Caco-2 (cell line): ENCODE measurements at regions of chr20 and their contacts with region 1.

Region 1: DNA sequence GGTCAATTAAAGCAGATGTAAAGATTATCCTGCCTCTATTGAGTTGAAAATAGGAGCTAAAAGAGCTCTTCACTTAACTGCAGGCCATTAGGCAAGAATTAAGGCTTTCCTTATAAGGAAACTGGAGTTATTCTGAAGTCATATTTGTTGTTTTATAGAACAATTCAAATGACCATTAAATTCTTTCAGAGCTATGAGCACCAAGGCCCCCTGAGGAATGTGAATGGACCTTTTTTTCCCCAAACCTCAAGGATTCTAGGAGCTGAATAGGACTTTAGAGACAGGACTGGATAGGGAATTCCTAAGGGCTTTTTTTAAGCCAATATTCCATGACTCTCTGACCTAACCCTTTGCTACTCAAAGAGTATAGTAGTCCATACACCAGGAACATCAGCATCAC is 565.7 kb upstream of the BTBD3 start:
- DNase-seq: no peak
- H3K4me3 ChIP-seq: no peak overlapping the region
- H3K4me3 Mint-ChIP-seq: no peak overlapping the region
- H3K27ac Mint-ChIP-seq: no peak overlapping the region
- H3K4me1 ChIP-seq: no peaks in the 10 kb centered on the region
- H3K4me1 Mint-ChIP-seq: peaks cover 7% of the 10 kb centered on the region
- H3K27me3 ChIP-seq: no peaks in the 10 kb centered on the region
- H3K27me3 Mint-ChIP-seq: no peaks in the 10 kb centered on the region
- CTCF ChIP-seq: no peak

Region 2: DNA sequence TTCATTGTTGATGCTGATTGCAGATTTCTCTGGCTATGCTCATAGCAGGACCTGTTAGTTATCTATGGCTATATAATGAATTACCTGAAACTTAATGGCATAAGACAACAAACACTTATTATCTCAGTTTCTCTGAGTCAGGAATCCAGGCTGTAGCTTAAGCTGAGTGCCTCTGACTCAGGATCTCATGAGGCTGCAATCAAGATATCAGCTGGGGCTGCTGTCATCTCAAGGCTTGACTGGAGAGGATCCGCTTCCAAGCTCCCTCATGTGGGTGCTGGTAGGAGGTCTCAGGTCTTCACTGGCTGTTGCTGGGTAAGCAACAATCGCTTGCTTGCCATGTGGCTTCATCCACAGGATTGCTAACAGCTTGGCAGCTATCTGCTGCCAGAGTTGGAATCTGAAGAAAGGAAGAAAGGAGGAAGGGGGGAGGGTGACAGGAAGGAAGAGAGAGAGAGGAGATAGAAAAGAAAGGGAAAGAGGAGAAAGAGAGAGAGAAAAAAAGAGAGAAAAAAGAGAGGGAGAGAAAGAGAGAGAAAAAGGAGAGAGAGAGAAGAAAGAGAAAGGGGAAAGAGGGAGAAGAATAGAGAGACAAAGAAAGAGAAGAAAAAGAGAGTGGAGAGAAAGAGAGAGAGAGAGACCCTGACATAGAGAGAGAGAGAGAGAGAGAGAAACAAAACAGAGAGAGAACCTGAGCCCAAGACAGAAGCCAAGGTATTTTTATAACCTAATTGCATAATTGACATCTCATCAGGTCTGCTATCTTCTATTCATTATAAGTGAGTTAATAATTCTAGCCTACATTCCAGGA is 13.3 kb before region 1 on chr20:
- CTCF ChIA-PET with region 1: no interaction called
- POLR2A ChIA-PET with region 1: interaction called, 10 read pairs
- intact Hi-C with region 1: no loop called
- DNase-seq: no peak
- H3K4me3 ChIP-seq: no peak overlapping the region
- H3K4me3 Mint-ChIP-seq: no peak overlapping the region
- H3K27ac Mint-ChIP-seq: no peak overlapping the region
- H3K4me1 ChIP-seq: no peaks in the 10 kb centered on the region
- H3K4me1 Mint-ChIP-seq: no peaks in the 10 kb centered on the region
- H3K27me3 ChIP-seq: no peaks in the 10 kb centered on the region
- H3K27me3 Mint-ChIP-seq: peaks cover 9% of the 10 kb centered on the region
- CTCF ChIP-seq: no peak

Region 3: GRCh38 chr20:11411765-11412164 is 59.7 kb after region 1 on chr20:
- CTCF ChIA-PET with region 1: no interaction called
- POLR2A ChIA-PET with region 1: no interaction called
- intact Hi-C with region 1: no loop called
- DNase-seq: no peak
- H3K4me3 ChIP-seq: no peak overlapping the region
- H3K4me3 Mint-ChIP-seq: no peak overlapping the region
- H3K27ac Mint-ChIP-seq: no peak overlapping the region
- H3K4me1 ChIP-seq: no peaks in the 10 kb centered on the region
- H3K4me1 Mint-ChIP-seq: no peaks in the 10 kb centered on the region
- H3K27me3 ChIP-seq: no peaks in the 10 kb centered on the region
- H3K27me3 Mint-ChIP-seq: no peaks in the 10 kb centered on the region
- CTCF ChIP-seq: no peak